Colonic mucosa (tissue), 4 donors: ENCODE measurements at regions of chr20 and their contacts with region 1.

Region 1: GRCh38 chr20:41639630-41640029 is 21.5 kb upstream of the CHD6 start:
- DNase-seq: no peak
- H3K4me3 ChIP-seq: no peak overlapping the region
- H3K27ac ChIP-seq: no peak overlapping the region
- H3K4me1 ChIP-seq: no peaks in the 10 kb centered on the region
- H3K27me3 ChIP-seq: no peaks in the 10 kb centered on the region
- CTCF ChIP-seq: no peak

Region 2: GRCh38 chr20:40797425-40797824 is 842.2 kb before region 1 on chr20:
- intact Hi-C with region 1: no loop called
- DNase-seq: no peak
- H3K4me3 ChIP-seq: no peak overlapping the region
- H3K27ac ChIP-seq: no peak overlapping the region
- H3K4me1 ChIP-seq: no peaks in the 10 kb centered on the region
- H3K27me3 ChIP-seq: no peaks in the 10 kb centered on the region
- CTCF ChIP-seq: peak; percentile 24

Region 3: GRCh38 chr20:41538810-41539596 is 100.6 kb before region 1 on chr20:
- intact Hi-C with region 1: loop called (anchors 2 kb)
- DNase-seq: no peak
- H3K4me3 ChIP-seq: no peak overlapping the region
- H3K27ac ChIP-seq: no peak overlapping the region
- H3K4me1 ChIP-seq: no peaks in the 10 kb centered on the region
- H3K27me3 ChIP-seq: no peaks in the 10 kb centered on the region
- CTCF ChIP-seq: no peak